Adrenal gland (tissue), 19 donors: ENCODE measurements at regions of chr6 and their contacts with region 1.

Region 1: DNA sequence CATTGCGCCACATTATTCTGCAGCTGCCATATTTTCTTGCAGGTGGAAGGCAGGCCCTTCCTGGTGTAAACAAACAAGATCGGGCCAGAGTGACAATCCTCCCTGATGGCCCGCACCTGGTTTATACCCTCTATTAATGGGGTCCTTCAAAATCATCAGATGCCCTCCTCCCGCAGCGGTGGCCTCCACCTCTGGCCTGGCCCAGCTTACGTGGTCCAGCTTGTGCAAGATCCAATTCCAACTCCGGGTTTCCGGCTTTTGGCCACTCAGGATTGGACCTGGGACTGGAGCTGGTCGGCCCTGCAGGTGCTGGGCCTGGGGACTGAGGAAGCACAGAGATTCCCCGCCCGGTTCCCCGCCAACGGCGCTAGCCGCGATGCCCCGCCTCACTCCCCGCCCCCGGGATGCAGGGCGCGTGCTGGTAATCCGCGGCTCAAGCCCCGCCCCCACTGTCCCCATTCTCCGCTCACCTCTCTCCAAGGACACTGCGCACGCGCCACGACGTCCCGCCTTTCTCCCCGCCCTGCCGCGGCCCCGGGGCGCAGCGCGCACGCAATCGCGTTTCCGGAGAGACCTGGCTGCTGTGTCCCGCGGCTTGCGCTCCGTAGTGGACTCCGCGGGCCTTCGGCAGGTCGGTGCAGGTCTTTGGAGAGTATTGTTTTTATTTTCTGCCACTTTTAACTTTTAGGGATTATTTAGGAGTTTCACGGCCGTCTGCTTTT is at the start of gene TMEM14B:
- DNase-seq: peak; percentile 99 to 100 (median 100)
- H3K4me3 ChIP-seq: peak within 1 kb of the TSS; percentile 47 to 84 (median 78)
- H3K27ac ChIP-seq: peak within 1 kb of the TSS; percentile 65 to 85 (median 81)
- H3K4me1 ChIP-seq: peaks cover 19 to 28% of the 10 kb centered on the region in 2 donors
- H3K27me3 ChIP-seq: no peaks in the 10 kb centered on the region
- CTCF ChIP-seq: no peak
- POLR2A ChIP-seq: peak; percentile 77 to 96
- total RNA-seq, gene TMEM14B: 110 to 188 (median 123) TPM

Region 2: GRCh38 chr6:10659699-10660348 is 87.6 kb before region 1 on chr6:
- intact Hi-C with region 1: no loop called
- DNase-seq: peak in 2 of 7 donors; percentile 15 to 16
- H3K4me3 ChIP-seq: no peak overlapping the region
- H3K27ac ChIP-seq: no peak overlapping the region
- H3K4me1 ChIP-seq: no peaks in the 10 kb centered on the region
- H3K27me3 ChIP-seq: no peaks in the 10 kb centered on the region
- CTCF ChIP-seq: no peak
- POLR2A ChIP-seq: no peak

Region 3: GRCh38 chr6:10694302-10695085 is 52.9 kb before region 1 on chr6 and contains the starts of genes C6orf52 and PAK1IP1:
- intact Hi-C with region 1: loop called in 1 of 2 experiments (anchors 10 kb)
- DNase-seq: peak; percentile 89 to 96 (median 93)
- H3K4me3 ChIP-seq: peak within 1 kb of the TSS; percentile 68 to 87 (median 78)
- H3K27ac ChIP-seq: peak within 1 kb of the TSS; percentile 80 to 98 (median 94)
- H3K4me1 ChIP-seq: peaks cover 18 to 25% of the 10 kb centered on the region in 2 donors
- H3K27me3 ChIP-seq: no peaks in the 10 kb centered on the region
- CTCF ChIP-seq: peak in 1 of 6 experiments; percentile 6
- POLR2A ChIP-seq: peak; percentile 65 to 74
- total RNA-seq, gene C6orf52: 0.96 to 5.5 (median 2.6) TPM in 6 of 9 donors, not detected in the others
- total RNA-seq, gene PAK1IP1: 4.5 to 17.6 (median 13.8) TPM